ENCODE measurements at regions of chr9 and their contacts with region 1.

Region 1: GRCh38 chr9:30299126-30299780 is 2085.2 kb upstream of the ACO1 start:
- DNase-seq: no peak
- ATAC-seq: no peak
- H3K4me3 ChIP-seq: no peak overlapping the region
- H3K4me3 Mint-ChIP-seq: no peak overlapping the region
- H3K27ac ChIP-seq: no peak overlapping the region
- H3K27ac Mint-ChIP-seq: no peak overlapping the region
- H3K4me1 ChIP-seq: no peaks in the 10 kb centered on the region
- H3K4me1 Mint-ChIP-seq: no peaks in the 10 kb centered on the region
- H3K27me3 ChIP-seq: no peaks in the 10 kb centered on the region
- H3K27me3 Mint-ChIP-seq: no peaks in the 10 kb centered on the region

Region 2: DNA sequence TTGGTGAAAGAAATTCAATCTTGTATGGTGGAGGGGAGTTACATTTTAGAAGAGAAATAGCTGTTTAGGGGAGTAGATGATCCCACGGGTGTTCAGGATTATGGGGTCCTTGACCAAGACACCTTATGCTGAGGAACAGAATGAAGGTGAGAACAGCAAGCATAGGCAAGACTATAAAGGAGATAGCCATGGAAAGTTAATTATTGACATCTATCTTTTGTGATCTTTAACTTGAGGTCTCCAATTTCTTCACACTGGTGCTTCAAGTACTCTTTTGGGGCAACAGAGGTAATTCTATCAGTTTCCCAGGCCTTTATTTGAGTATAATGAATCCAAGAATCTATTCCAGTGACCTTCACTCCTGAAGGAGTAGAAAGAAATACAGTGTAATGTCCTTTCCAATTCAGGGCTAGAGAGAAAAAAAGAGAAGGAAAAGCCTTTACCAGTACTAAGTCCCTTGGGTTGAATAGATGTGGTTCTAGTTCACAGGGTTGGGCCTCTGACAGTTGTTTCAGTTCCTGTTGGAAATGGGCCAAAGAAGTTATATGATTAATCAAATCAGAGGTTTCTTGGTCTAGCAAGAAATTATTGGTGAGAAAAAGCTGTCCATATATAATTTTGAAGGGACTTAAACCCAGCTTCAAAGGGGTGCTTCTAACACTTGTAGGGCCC is 18.9 kb before region 1 on chr9:
- CTCF ChIA-PET with region 1: no interaction called
- POLR2A ChIA-PET with region 1: no interaction called
- intact Hi-C with region 1: no loop called
- DNase-seq: no peak
- ATAC-seq: no peak
- H3K4me3 ChIP-seq: no peak overlapping the region
- H3K4me3 Mint-ChIP-seq: no peak overlapping the region
- H3K27ac ChIP-seq: no peak overlapping the region
- H3K27ac Mint-ChIP-seq: no peak overlapping the region
- H3K4me1 ChIP-seq: no peaks in the 10 kb centered on the region
- H3K4me1 Mint-ChIP-seq: no peaks in the 10 kb centered on the region
- H3K27me3 ChIP-seq: no peaks in the 10 kb centered on the region
- H3K27me3 Mint-ChIP-seq: no peaks in the 10 kb centered on the region

Region 3: GRCh38 chr9:30349526-30350513 is 50.6 kb after region 1 on chr9:
- CTCF ChIA-PET with region 1: no interaction called
- POLR2A ChIA-PET with region 1: no interaction called
- intact Hi-C with region 1: loop called in 1 of 2 experiments (anchors 10 kb)
- DNase-seq: no peak
- ATAC-seq: no peak
- H3K4me3 ChIP-seq: no peak overlapping the region
- H3K4me3 Mint-ChIP-seq: no peak overlapping the region
- H3K27ac ChIP-seq: no peak overlapping the region
- H3K27ac Mint-ChIP-seq: no peak overlapping the region
- H3K4me1 ChIP-seq: no peaks in the 10 kb centered on the region
- H3K4me1 Mint-ChIP-seq: no peaks in the 10 kb centered on the region
- H3K27me3 ChIP-seq: no peaks in the 10 kb centered on the region
- H3K27me3 Mint-ChIP-seq: no peaks in the 10 kb centered on the region

Region 4: GRCh38 chr9:30995951-30996738 is 696.9 kb after region 1 on chr9:
- CTCF ChIA-PET with region 1: no interaction called
- POLR2A ChIA-PET with region 1: no interaction called
- intact Hi-C with region 1: loop called in 1 of 2 experiments (anchors 10 kb)
- DNase-seq: no peak
- ATAC-seq: no peak
- H3K4me3 ChIP-seq: no peak overlapping the region
- H3K4me3 Mint-ChIP-seq: no peak overlapping the region
- H3K27ac ChIP-seq: no peak overlapping the region
- H3K27ac Mint-ChIP-seq: no peak overlapping the region
- H3K4me1 ChIP-seq: no peaks in the 10 kb centered on the region
- H3K4me1 Mint-ChIP-seq: no peaks in the 10 kb centered on the region
- H3K27me3 ChIP-seq: no peaks in the 10 kb centered on the region
- H3K27me3 Mint-ChIP-seq: no peaks in the 10 kb centered on the region

Measured in naive thymus-derived CD4-positive, alpha-beta T cell (primary cell).